PC-9 (cell line): ENCODE measurements at regions of chr4 and their contacts with region 1.

Region 1: DNA sequence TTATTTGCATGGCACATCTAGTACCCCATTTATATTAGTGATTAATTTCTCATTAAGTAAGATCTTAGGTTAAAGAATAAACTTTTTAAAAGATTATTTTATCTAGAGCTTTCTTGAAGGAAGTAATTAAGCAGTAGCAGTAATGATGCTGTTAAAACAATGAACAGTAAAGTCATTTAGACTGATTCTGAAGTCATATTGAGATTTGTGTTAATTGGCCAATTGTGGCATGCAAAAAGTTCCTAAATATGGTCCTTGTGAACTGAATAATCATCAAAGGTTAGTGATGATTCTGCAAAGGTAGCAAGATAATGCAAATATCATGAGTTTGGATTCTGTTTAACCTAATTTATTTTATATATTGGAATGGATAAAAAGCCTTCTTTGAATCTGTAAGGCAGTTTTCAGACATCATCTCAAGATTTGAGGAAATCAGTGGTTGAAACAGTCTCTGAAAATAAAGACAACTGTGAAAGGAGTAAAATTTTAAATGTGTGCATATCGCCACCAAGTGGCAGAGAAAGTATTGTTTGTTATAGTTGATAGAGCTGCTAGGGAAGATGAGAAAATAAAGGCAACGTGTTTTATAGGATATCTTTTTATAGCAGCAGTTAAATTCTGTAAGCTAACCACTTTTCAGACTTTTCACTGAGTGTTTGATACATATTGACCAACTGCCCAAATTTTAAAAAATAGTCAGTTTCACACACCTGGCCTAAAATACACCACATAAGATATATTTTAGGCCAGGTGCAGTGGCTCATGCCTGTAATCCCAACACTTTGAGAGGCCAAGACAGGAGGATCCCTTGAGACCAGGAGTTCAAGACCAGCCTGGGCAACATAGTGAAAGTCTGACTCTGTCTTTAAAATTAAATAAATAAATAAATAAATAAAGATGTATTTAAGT is 79.6 kb downstream of the CCKAR start:
- DNase-seq: peak; percentile 5 to 39
- H3K4me3 ChIP-seq: no peak overlapping the region
- H3K27ac ChIP-seq: no peak overlapping the region
- H3K4me1 ChIP-seq: no peaks in the 10 kb centered on the region
- H3K27me3 ChIP-seq: no peaks in the 10 kb centered on the region
- CTCF ChIP-seq: peak; percentile 74

Region 2: GRCh38 chr4:25925486-25926201 is 485.0 kb before region 1 on chr4:
- CTCF ChIA-PET with region 1: no interaction called
- POLR2A ChIA-PET with region 1: no interaction called
- intact Hi-C with region 1: loop called (anchors 10 kb)
- DNase-seq: no peak
- H3K4me3 ChIP-seq: no peak overlapping the region
- H3K27ac ChIP-seq: no peak overlapping the region
- H3K4me1 ChIP-seq: no peaks in the 10 kb centered on the region
- H3K27me3 ChIP-seq: no peaks in the 10 kb centered on the region
- CTCF ChIP-seq: peak; percentile 54

Region 3: DNA sequence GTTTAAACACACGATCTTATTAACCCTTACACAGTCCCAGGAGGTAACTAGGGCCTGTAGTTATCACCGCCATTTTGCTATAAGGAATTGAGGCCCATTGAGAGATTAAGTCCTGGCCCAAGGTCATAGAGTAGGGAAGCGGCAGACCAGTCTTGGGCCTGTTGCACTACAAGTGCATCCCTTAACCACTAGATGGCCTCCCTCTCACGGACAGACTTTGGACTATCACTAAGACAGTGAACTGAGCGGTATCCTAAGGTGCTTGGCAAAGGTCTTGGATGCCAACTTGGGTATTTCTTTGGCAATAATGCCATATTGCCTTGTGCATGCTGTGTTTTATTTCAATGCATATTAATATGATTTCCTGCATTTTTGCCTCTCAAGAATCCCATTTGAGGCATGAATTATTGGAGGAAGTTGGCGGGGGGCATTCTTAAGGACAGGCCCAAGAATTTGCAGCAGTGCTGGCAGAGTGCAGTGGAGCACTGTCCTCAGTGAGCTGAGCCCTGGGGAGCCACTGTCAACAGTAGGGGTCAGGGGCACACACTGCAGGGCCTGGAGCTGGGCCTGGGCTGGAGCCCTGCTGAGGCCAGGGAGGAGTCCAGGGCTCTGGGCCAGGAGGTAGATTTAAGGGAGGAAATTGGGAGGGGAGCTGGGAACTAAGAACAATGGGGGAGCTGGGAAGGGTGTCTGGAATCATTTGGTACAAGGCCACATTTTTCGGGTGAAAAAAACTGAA is 349.2 kb before region 1 on chr4:
- CTCF ChIA-PET with region 1: interaction called, 3 read pairs
- POLR2A ChIA-PET with region 1: no interaction called
- intact Hi-C with region 1: loop called (anchors 2 kb)
- DNase-seq: peak; percentile 31 to 41
- H3K4me3 ChIP-seq: no peak overlapping the region
- H3K27ac ChIP-seq: no peak overlapping the region
- H3K4me1 ChIP-seq: no peaks in the 10 kb centered on the region
- H3K27me3 ChIP-seq: no peaks in the 10 kb centered on the region
- CTCF ChIP-seq: peak; percentile 73

Region 4: DNA sequence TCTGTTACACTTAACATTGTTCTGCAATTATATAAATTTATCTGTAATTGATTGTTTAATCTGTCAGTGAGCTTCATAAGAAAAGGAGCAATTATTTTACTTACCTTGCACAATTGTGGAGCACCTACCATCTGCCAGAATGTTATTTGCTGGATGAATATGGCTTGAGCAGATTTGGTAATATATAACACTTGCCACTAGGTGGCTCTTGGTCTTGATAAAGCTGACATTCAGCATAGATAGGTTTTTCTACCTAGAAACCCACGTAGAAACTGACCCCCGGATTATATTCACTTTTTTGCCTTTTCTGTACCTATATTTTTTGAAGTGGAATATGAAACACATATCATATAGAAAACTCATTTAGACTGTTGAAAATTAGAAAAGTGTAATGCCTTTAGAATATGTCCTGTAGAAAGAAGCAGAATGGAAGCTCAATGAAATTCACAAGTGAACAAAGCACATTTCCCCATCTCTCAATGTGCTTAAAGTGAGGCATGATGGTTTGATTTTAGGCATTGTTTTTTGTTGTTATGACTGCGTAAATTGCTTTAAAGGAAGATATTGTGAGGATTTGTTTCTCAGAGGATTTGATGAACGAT is 80.4 kb before region 1 on chr4:
- CTCF ChIA-PET with region 1: interaction called, 3 read pairs
- POLR2A ChIA-PET with region 1: no interaction called
- intact Hi-C with region 1: loop called (anchors 2 kb)
- DNase-seq: peak in 1 of 2 experiments; percentile 45
- H3K4me3 ChIP-seq: no peak overlapping the region
- H3K27ac ChIP-seq: no peak overlapping the region
- H3K4me1 ChIP-seq: 0 out of 2 replicates have a peak, but pooled peaks cover 3% of the 10 kb centered on the region
- H3K27me3 ChIP-seq: no peaks in the 10 kb centered on the region
- CTCF ChIP-seq: peak; percentile 80